ENCODE measurements at regions of chr7 and their contacts with region 1.

Region 1: GRCh38 chr7:128783143-128783861 is 7.7 kb upstream of the OPN1SW start:
- DNase-seq: peak; percentile 78 to 90 (median 88)
- ATAC-seq: peak; percentile 91 to 95 (median 94)
- H3K4me3 ChIP-seq: no peak overlapping the region
- H3K27ac ChIP-seq: peak overlapping the region in 5 of 12 donors; percentile 2 to 73 (median 43)
- H3K4me1 ChIP-seq: peaks cover 0 to 21% (median 4%) of the 10 kb centered on the region in 12 donors
- H3K27me3 ChIP-seq: no peaks in the 10 kb centered on the region
- CTCF ChIP-seq: no peak
- POLR2A ChIP-seq: no peak

Region 2: DNA sequence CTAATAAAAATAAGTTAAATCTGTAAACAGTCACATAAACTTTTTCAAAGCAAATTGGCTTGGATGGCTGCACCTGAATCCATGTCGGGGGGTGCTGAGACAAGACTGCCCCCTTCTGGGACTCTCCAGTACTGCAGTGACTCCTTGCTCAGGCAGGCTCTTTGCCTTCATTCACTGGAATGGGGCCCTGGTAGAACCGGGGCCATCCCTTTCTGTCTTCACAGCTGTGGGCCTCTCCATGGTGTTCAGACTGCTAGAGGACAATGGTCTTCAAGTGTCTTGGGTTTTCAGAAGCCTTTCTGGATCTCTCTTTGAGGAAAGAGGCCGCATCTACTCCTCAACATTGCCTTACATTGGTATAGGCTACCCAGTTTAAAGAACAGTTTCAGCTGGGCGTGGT is 357.5 kb before region 1 on chr7:
- intact Hi-C with region 1: no loop called
- DNase-seq: peak; percentile 55 to 76 (median 66)
- ATAC-seq: peak; percentile 45 to 60 (median 56)
- H3K4me3 ChIP-seq: no peak overlapping the region
- H3K27ac ChIP-seq: no peak overlapping the region
- H3K4me1 ChIP-seq: peaks cover 0 to 14% (median 0%) of the 10 kb centered on the region in 12 donors
- H3K27me3 ChIP-seq: no peaks in the 10 kb centered on the region
- CTCF ChIP-seq: peak; percentile 79 to 98 (median 86)
- POLR2A ChIP-seq: no peak

Region 3: GRCh38 chr7:128726059-128726736 is 57.1 kb before region 1 on chr7:
- intact Hi-C with region 1: no loop called
- DNase-seq: no peak
- ATAC-seq: no peak
- H3K4me3 ChIP-seq: no peak overlapping the region
- H3K27ac ChIP-seq: no peak overlapping the region
- H3K4me1 ChIP-seq: no peaks in the 10 kb centered on the region
- H3K27me3 ChIP-seq: no peaks in the 10 kb centered on the region
- CTCF ChIP-seq: no peak
- POLR2A ChIP-seq: no peak

Region 4: GRCh38 chr7:128747327-128748079 is 35.8 kb before region 1 on chr7:
- intact Hi-C with region 1: loop called in 1 of 10 experiments (anchors 5 kb)
- DNase-seq: no peak
- ATAC-seq: no peak
- H3K4me3 ChIP-seq: no peak overlapping the region
- H3K27ac ChIP-seq: no peak overlapping the region
- H3K4me1 ChIP-seq: peaks cover 0 to 51% (median 32%) of the 10 kb centered on the region in 12 donors
- H3K27me3 ChIP-seq: no peaks in the 10 kb centered on the region
- CTCF ChIP-seq: no peak
- POLR2A ChIP-seq: no peak